Activated CD4-positive, alpha-beta T cell treated with anti-CD3 and anti-CD28 coated beads, Interleukin-2, amount 10 ng/mL, durations not matched to agents 24 days and 14 days (primary cell): ENCODE measurements at regions of chr12 and their contacts with region 1.

Region 1: GRCh38 chr12:46372544-46373110 is at the start of gene SLC38A2:
- DNase-seq: peak; percentile 99
- H3K4me3 Mint-ChIP-seq: peak within 1 kb of the TSS; percentile 86
- H3K27ac Mint-ChIP-seq: peak within 1 kb of the TSS; percentile 99
- H3K4me1 Mint-ChIP-seq: peaks cover 60% of the 10 kb centered on the region
- H3K27me3 Mint-ChIP-seq: peaks cover 3% of the 10 kb centered on the region
- total RNA-seq, gene SLC38A2: 158 and 168 TPM in 2 replicates

Region 2: GRCh38 chr12:45728630-45729232 is 643.9 kb before region 1 on chr12:
- intact Hi-C with region 1: loop called (anchors 2 kb)
- DNase-seq: peak; percentile 99
- H3K4me3 Mint-ChIP-seq: peak overlapping the region; percentile 91
- H3K27ac Mint-ChIP-seq: peak overlapping the region; percentile 99
- H3K4me1 Mint-ChIP-seq: peaks cover 27% of the 10 kb centered on the region
- H3K27me3 Mint-ChIP-seq: no peaks in the 10 kb centered on the region

Region 3: DNA sequence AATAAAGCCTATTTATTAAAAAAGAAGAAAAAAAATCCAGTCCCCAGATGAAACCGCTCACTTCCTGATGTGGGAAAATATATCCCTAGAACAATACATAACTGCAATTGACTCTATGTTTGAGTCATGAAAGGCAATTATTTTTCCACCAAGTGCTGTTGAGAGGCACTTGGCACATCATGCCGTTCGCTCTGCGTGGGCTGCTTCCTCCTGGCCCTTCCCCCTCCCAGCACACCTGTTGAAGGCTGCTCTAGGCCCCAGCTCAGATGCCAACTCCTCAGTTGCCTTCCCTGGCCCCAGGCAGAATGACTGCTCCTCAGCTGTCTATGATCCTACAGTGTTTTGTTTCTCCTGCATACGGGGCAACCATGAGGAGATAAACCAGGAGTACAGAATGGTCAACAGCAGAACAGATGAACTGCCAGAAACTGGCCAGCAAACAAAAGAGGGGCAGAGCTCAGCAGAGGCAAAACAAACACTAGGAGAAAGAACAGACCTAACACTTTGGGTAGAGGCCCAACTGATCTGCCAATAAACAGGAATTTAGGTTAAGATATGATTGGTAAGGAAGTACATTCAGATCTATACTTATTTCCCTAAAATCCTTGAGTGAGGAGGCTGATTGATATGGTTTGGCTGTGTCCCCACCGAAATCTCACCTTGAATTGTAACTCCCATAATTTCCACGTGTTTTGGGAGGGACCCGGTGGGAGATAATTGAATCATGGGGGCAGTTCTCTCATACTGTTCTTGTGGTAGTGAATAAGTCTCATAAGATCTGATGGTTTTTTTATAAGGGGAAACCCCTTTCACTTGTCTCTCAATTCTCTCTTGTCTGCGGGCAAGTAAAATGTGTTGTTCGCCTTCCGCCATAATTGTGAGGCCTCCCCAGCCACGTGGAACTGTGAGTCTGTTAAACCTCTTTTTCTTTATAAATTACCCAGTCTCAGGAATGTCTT is 162.4 kb before region 1 on chr12:
- intact Hi-C with region 1: loop called (anchors 1 kb)
- DNase-seq: peak; percentile 79
- H3K4me3 Mint-ChIP-seq: peak overlapping the region; percentile 65
- H3K27ac Mint-ChIP-seq: peak overlapping the region; percentile 94
- H3K4me1 Mint-ChIP-seq: peaks cover 69% of the 10 kb centered on the region
- H3K27me3 Mint-ChIP-seq: no peaks in the 10 kb centered on the region

Region 4: DNA sequence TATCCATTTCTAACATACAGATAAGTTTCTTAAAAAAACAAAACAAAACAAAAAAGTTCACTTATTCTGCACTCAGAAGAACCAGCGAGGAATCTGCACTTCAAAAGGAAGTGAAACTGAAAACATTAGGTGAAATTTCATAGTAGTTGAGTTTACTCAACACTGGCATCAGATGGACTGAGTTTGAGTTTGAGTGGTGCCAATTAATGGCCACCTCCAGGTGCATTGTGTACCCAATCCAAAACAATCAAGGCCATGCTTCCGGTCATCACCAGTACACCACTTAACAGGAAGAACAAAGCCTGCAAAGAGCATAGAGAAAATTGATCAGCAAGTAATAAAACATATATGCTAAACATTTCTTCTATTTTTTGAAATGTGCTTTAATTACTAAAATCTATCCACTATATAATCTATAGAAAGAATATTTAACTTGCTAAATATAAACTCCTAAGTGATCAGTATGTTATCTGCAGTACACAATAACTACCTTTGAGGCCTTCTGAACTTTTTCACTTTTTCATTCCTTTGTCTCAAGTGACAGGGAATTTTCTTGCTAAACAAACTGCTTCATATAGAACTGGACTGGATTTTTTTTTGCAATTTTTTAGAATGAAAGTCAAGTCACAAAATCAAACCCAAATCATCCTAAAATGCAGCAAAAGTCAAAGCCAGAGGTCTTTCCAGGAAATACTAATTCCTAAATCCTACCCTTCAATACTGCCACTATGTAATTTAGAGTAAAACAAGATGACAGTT is 11.5 kb before region 1 on chr12:
- intact Hi-C with region 1: loop called (anchors 1 kb)
- DNase-seq: no peak
- H3K4me3 Mint-ChIP-seq: peak overlapping the region; percentile 24
- H3K27ac Mint-ChIP-seq: peak overlapping the region; percentile 88
- H3K4me1 Mint-ChIP-seq: peaks cover 44% of the 10 kb centered on the region
- H3K27me3 Mint-ChIP-seq: no peaks in the 10 kb centered on the region

Region 5: GRCh38 chr12:46516933-46517578 is 144.4 kb after region 1 on chr12:
- intact Hi-C with region 1: loop called (anchors 1 kb)
- DNase-seq: peak; percentile 83
- H3K4me3 Mint-ChIP-seq: peak overlapping the region; percentile 80
- H3K27ac Mint-ChIP-seq: peak overlapping the region; percentile 95
- H3K4me1 Mint-ChIP-seq: peaks cover 71% of the 10 kb centered on the region
- H3K27me3 Mint-ChIP-seq: no peaks in the 10 kb centered on the region

Region 6: DNA sequence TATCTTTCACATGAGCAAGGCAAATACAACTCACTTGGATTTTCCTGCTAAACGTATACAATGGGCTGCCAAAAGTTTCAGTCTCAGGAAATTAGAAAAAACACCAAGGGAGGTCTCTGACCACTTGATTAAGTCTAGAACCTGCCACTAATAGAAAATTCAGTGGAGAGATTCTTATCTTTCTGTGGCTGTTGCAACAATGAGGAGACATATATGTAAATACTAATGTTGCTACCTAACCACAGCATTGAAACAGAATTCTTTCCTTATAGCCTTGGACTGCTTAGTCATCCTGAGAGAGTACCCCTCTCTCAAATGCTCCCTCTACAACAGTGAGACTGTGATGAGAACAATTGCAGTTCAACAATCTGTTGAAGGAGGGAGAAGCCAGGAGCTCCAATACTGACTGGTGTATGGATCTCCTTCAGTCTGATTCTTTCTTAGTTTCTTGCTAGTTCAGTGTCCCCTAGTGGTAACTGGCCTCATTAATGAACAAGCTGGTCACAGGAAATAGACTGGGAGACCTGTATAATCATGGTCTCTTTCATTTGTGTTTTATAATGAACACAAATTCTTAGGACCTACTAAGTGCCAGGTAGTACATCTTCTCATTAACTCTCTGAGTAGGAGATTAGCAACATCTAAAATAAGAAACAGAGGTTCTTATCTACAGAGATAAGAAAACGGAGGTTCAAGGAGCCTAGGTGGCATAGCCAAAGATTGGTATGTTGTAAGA is 288.7 kb after region 1 on chr12:
- intact Hi-C with region 1: loop called (anchors 2 kb)
- DNase-seq: peak; percentile 76
- H3K4me3 Mint-ChIP-seq: no peak overlapping the region
- H3K27ac Mint-ChIP-seq: peak overlapping the region; percentile 45
- H3K4me1 Mint-ChIP-seq: peaks cover 35% of the 10 kb centered on the region
- H3K27me3 Mint-ChIP-seq: no peaks in the 10 kb centered on the region

Region 7: GRCh38 chr12:47391566-47391965 is 1018.9 kb after region 1 on chr12:
- intact Hi-C with region 1: loop called (anchors 5 kb)
- DNase-seq: peak; percentile 88
- H3K4me3 Mint-ChIP-seq: peak overlapping the region; percentile 81
- H3K27ac Mint-ChIP-seq: peak overlapping the region; percentile 99
- H3K4me1 Mint-ChIP-seq: peaks cover 77% of the 10 kb centered on the region
- H3K27me3 Mint-ChIP-seq: no peaks in the 10 kb centered on the region